Sciatic nerve (tissue), 2 donors: ENCODE measurements at regions of chr6 and their contacts with region 1.

Region 1: GRCh38 chr6:42907336-42907735 is 8.5 kb upstream of the PTCRA start:
- DNase-seq: no peak
- ATAC-seq: no peak

Region 2: DNA sequence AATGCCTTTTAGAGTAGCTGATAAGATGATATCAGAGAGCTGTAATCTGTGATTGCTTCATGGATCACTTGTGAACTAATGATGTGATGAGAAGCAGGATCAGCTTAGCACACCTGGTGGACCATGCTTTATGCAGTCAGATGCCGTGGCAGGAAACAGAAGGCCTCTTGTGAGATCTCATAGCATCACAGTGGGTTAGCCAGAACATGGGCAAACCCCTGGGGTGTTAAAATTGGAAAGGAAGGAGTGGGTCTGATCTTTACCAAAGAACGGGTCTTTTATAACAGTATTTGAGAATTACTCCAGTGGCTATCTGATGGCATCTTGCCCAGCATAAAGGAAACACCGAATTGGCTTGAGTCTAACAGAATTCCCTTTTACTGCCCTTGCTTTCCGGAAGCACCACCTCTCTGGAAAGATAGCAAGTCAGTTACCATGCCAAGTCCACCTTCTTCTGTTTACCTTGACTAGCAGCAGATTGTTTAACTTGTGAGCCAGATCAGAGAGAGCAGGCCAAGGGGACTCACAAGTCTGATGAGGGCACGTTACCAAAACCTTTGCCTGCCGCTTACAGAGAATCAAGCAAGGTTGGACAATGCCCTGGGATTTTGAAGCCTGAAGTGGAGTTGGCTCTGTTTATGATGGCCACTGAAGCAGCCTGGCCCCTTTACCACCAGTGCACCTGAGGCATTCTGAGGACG is 242.9 kb after region 1 on chr6:
- intact Hi-C with region 1: loop called (anchors 5 kb)
- DNase-seq: no peak
- ATAC-seq: peak; percentile 42